Dorsolateral prefrontal cortex (tissue), 120 donors: ENCODE measurements at regions of chr5 and their contacts with region 1.

Region 1: DNA sequence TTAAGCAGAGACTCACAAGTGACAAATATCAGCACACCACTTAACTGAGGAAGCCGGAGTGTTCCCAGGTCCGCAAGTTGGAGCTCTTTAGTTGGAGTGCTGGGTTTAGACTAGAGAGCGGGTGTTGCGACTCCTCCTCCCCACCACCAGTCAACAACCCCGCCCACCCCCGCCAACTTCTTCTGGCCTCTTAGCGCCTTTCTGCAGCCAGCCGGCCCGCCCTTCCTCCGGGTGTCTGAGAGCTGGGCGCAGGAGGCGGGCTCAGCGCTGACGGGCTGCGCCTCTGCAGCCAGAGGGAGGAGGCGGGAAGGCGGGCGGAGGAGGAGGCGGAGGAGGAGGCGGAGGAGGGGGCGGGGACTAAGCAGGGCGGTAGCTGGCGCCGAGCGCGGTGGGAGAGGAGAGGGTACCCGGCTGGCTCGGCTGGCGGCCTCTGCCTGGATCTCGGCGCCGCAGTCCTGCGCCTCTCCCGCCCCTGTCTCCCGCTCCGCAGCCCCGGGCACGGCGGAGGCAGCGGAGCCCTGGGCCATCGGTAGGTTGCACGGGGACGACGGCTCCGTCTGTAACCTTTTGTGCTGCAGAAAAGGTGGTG is at the start of gene MACIR:
- DNase-seq: peak; percentile 80 to 94 (median 92)
- H3K4me3 ChIP-seq: peak within 1 kb of the TSS; percentile 59 to 98 (median 91)
- H3K27ac ChIP-seq: peak within 1 kb of the TSS; percentile 79 to 99 (median 96)
- H3K27me3 ChIP-seq: no peaks in the 10 kb centered on the region
- CTCF ChIP-seq: peak in 32 of 56 donors; percentile 11 to 56 (median 32)
- total RNA-seq, gene MACIR: 21.8 to 45.7 (median 34.8) TPM

Region 2: GRCh38 chr5:103086547-103086946 is 171.9 kb before region 1 on chr5:
- intact Hi-C with region 1: no loop called
- DNase-seq: no peak
- H3K4me3 ChIP-seq: no peak overlapping the region
- H3K27ac ChIP-seq: no peak overlapping the region
- H3K27me3 ChIP-seq: no peaks in the 10 kb centered on the region
- CTCF ChIP-seq: no peak

Region 3: DNA sequence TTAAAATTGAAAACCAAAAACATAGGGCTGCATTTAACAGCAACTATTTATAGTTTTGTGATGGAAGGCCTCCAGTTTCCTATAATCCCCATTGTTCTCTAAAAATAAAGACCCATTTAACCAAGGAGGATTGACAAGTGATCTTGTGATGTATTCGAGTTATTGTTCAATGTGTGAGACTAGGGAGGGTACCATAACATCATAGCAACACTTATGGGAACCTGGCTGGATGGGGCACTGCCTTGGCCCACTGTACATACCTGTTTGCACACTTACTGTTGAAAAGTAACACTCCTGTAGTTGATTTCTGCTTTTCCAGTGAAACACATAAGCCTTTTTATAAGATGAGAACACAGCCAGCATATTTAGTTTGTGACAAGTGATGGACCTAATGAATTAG is 32.4 kb after region 1 on chr5:
- intact Hi-C with region 1: loop called (anchors 1 to 2 kb)
- DNase-seq: no peak
- H3K4me3 ChIP-seq: peak overlapping the region in 29 of 59 donors; percentile 0 to 46 (median 17)
- H3K27ac ChIP-seq: peak overlapping the region; percentile 53 to 99 (median 93)
- H3K27me3 ChIP-seq: no peaks in the 10 kb centered on the region
- CTCF ChIP-seq: no peak

Region 4: GRCh38 chr5:103373597-103374472 is 115.4 kb after region 1 on chr5:
- intact Hi-C with region 1: loop called in 1 of 2 experiments (anchors 5 kb)
- DNase-seq: no peak
- H3K4me3 ChIP-seq: peak overlapping the region in 13 of 59 donors; percentile 2 to 42 (median 15)
- H3K27ac ChIP-seq: peak overlapping the region in 49 of 59 donors; percentile 1 to 77 (median 53)
- H3K27me3 ChIP-seq: no peaks in the 10 kb centered on the region
- CTCF ChIP-seq: no peak

Region 5: GRCh38 chr5:103428411-103428871 is 170.0 kb after region 1 on chr5:
- intact Hi-C with region 1: loop called in 1 of 2 experiments (anchors 5 kb)
- DNase-seq: peak in 6 of 10 donors; percentile 21 to 56 (median 35)
- H3K4me3 ChIP-seq: peak overlapping the region in 35 of 59 donors; percentile 0 to 48 (median 24)
- H3K27ac ChIP-seq: peak overlapping the region in 17 of 59 donors; percentile 1 to 54 (median 25)
- H3K27me3 ChIP-seq: no peaks in the 10 kb centered on the region
- CTCF ChIP-seq: peak in 1 of 56 donors; percentile 11

Region 6: DNA sequence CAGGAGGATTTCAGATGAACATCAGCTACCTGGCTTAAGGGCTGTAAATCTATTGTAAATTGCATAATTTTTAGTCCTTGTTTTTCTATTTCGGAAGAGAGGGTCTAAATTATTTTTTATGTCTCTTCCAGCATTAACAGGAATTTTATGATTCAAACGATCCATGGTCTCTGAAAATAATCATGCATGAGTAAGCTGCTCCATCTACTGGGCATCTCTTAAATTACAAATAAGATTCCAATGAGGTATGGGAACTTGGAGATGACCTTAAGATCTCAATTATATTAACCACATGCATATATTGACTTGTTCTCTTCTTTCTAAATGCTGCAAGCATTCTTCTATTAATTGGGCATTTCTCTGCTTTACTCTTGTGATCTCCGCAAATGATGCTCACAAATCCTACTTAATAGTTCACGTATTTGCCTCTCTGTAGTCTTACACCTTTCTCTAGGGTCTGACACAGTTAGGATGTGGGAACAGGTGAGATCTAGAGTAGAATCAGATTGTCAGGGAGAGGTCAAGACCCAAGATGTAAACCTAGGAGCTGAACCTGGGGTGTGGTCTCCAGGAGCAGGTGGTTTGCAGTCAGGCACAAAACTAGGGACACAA is 217.3 kb after region 1 on chr5:
- intact Hi-C with region 1: loop called (anchors 2 to 10 kb)
- DNase-seq: no peak
- H3K4me3 ChIP-seq: peak overlapping the region in 1 of 59 donors; percentile 21
- H3K27ac ChIP-seq: no peak overlapping the region
- H3K27me3 ChIP-seq: no peaks in the 10 kb centered on the region
- CTCF ChIP-seq: peak; percentile 46 to 93 (median 78)

Region 7: GRCh38 chr5:103645816-103646215 is 387.4 kb after region 1 on chr5:
- intact Hi-C with region 1: no loop called
- DNase-seq: no peak
- H3K4me3 ChIP-seq: no peak overlapping the region
- H3K27ac ChIP-seq: no peak overlapping the region
- H3K27me3 ChIP-seq: no peaks in the 10 kb centered on the region
- CTCF ChIP-seq: no peak